ENCODE measurements at regions of chr5 and their contacts with region 1.

Region 1: DNA sequence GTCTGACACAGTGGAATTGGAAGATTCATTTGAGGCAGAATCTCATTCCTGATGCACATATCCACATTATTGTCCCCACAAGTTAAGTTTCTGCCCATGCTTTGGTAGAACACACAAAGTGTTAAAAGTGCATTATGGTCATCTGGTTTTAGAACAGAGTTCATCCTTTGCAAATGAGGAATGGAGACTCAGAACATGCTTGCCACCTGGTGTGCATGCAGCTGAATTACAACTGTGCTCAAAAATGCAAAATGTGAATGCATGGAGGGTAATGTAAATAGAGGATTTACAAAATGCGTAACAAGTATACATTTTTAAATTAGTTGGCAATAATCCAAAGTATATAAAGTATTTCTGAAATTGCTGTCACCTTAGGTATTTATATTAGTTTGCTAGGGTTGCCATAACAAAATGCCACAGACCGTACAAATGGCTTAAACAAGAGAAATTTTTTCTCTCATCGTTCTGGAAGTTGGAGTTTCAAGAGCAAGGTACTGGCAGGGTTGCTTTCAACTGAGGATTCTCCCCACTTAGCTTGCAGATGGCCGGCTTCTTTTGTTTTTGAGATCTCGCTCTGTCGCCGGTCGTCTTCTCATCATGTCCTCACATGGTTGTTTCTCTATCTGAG is 671.2 kb downstream of the TAF11L14 start:
- DNase-seq: peak in 1 of 2 experiments; percentile 38
- H3K4me3 ChIP-seq: no peak overlapping the region
- H3K27ac ChIP-seq: no peak overlapping the region
- H3K4me1 ChIP-seq: no peaks in the 10 kb centered on the region
- H3K27me3 ChIP-seq: no peaks in the 10 kb centered on the region
- CTCF ChIP-seq: peak; percentile 89

Region 2: DNA sequence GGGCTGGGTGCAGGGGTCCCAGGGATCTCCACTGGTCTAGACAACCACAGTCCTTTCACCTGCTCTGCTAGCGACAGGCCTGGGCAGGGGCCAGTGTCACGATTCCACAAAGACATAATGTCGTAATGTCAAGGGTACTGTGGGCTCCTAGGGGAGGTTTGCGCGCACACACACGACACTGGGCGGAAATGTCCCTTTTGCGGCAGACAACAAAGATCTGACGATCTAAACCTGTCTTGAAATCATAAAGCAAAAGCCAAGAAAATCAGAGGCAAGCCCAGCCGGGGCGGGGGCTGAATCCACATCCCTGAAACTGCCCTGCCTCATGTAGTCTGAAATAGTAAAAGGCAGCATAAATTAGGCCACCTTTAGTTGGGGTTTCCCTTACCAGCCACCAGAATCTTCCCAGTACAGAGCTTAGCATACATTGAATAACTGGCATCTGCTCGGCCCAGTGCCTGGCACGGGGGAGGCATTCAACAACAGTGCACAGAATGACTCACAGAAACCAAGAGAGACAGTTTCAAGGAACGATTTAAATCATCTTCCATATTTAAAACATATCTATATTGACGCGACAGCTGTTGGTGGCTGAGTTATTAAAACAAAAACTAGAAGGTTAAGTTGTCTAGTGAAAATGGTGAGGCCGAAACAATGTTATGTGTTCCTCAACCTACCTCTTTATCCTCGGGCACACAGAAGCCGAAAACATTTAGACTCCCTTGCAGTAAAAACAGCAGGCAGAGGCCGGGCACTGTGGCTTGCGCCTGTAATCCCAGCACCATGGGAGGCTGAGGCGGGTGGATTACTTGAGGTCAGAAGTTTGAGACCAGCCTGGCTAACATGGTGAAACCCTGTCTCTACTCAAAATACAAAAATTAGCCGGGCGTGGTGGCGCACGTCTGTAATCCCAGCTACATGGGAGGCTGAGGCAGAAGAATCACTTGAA is 1520.3 kb before region 1 on chr5:
- CTCF ChIA-PET with region 1: no interaction called
- POLR2A ChIA-PET with region 1: no interaction called
- intact Hi-C with region 1: loop called (anchors 5 kb)
- DNase-seq: no peak
- H3K4me3 ChIP-seq: no peak overlapping the region
- H3K27ac ChIP-seq: no peak overlapping the region
- H3K4me1 ChIP-seq: no peaks in the 10 kb centered on the region
- H3K27me3 ChIP-seq: no peaks in the 10 kb centered on the region
- CTCF ChIP-seq: no peak

Region 3: DNA sequence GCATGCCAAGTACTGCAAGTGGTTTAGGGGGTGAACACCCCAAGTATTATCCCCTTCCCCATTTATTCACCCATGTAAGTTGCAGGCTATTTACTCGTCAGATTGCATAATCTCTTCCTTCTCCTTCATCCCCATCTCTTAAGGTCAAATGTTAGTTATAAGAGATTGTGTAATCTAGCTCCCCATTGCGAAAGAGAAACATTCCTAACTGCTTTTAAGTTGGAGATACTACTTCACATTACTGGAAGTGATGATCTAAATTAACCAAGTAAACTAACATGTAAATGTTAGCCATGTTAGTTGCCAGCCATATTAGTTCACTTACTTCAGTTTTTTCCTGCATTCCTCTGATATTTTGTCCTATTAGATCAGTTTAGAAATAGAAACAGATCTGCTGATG is 408.8 kb before region 1 on chr5:
- CTCF ChIA-PET with region 1: interaction called, 21 read pairs
- POLR2A ChIA-PET with region 1: no interaction called
- intact Hi-C with region 1: no loop called
- DNase-seq: no peak
- H3K4me3 ChIP-seq: no peak overlapping the region
- H3K27ac ChIP-seq: no peak overlapping the region
- H3K4me1 ChIP-seq: no peaks in the 10 kb centered on the region
- H3K27me3 ChIP-seq: no peaks in the 10 kb centered on the region
- CTCF ChIP-seq: no peak